SK-MEL-5 (cell line): ENCODE measurements at regions of chr6 and their contacts with region 1.

Region 1: GRCh38 chr6:15691250-15691869 is 28.5 kb upstream of the DTNBP1 start:
- DNase-seq: peak; percentile 97

Region 2: GRCh38 chr6:16183187-16183664 is 491.9 kb after region 1 on chr6:
- in situ Hi-C with region 1: loop called (anchors 25 kb)
- DNase-seq: peak; percentile 85